ENCODE measurements at regions of chr19 and their contacts with region 1.

Region 1: DNA sequence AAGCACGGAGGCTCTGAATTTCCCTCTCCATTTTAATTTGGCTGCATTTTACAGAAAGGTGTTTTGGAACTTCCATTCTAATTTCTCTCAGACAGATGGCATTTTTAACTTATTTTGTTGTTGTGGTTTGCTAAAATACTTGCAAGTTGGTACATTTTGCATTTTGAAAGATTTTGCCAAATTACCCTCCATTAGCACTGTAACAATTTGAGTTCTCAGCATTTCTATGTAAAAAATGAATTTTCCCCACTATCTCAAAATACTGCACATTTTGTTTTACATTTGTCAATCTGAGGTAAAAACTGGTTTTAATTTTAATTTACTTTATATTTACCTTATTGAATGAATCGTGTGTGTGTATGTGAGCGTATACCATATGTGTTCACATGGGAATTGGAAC is 7.0 kb upstream of the HNRNPL start:
- DNase-seq: no peak
- ATAC-seq: no peak
- H3K4me3 Mint-ChIP-seq: peak overlapping the region; percentile 1
- H3K27ac Mint-ChIP-seq: peak overlapping the region; percentile 57
- H3K4me1 Mint-ChIP-seq: peaks cover 32% of the 10 kb centered on the region
- H3K27me3 Mint-ChIP-seq: no peaks in the 10 kb centered on the region
- CTCF ChIP-seq: no peak

Region 2: GRCh38 chr19:38869856-38870607 is 13.2 kb after region 1 on chr19:
- CTCF ChIA-PET with region 1: interaction called, 20 read pairs
- POLR2A ChIA-PET with region 1: interaction called, 152 read pairs
- intact Hi-C with region 1: loop called (anchors 1 kb)
- DNase-seq: peak; percentile 95
- ATAC-seq: peak; percentile 83
- H3K4me3 Mint-ChIP-seq: peak overlapping the region; percentile 85
- H3K27ac Mint-ChIP-seq: peak overlapping the region; percentile 92
- H3K4me1 Mint-ChIP-seq: peaks cover 43% of the 10 kb centered on the region
- H3K27me3 Mint-ChIP-seq: no peaks in the 10 kb centered on the region
- CTCF ChIP-seq: peak; percentile 90